ENCODE measurements at regions of chr10 and their contacts with region 1.

Region 1: DNA sequence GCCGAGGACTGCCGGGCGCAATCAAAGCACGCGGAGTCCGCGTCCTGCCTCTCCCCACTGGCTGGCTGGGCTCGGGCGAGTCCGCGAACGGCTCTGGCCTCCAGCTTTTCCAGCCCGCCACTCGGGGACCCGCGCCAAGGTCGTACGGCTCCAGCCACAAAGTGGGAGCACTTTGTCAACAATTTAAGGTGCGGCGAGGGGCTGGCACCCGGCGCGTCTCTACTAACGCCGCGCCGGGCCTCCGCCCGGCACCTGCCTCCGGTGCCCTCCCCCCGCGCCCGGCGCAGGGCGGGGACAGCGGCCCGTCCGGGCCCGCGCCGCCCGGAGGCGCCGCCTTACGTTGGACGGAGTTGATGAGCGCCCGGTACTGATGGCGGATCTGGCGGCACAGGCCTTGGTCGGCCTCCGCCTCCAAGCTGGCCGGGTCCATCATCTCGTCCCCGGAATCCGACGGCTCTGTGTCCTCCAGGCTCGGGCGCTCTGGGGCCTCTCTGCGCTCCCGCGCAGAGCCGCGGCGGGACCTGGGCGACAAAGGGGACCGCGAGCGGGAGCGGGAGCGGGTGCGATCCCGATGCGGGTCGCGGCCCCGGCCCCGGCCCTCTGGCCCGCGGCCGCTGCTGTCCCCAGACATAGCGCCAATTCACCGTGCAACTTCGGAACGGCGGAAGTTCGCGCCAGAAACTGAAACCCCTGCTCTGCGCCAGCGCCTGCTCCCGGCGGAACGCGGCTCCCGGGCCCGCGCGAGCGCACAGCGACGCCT is at the start of gene NSMCE4A:
- DNase-seq: peak; percentile 49 to 83 (median 66)
- ATAC-seq: peak; percentile 85
- H3K4me3 ChIP-seq: peak within 1 kb of the TSS; percentile 63
- H3K4me3 Mint-ChIP-seq: peak within 1 kb of the TSS; percentile 87
- H3K27ac ChIP-seq: peak within 1 kb of the TSS; percentile 31 to 40
- H3K27ac Mint-ChIP-seq: peak within 1 kb of the TSS; percentile 36
- H3K4me1 ChIP-seq: peaks cover 21% of the 10 kb centered on the region
- H3K4me1 Mint-ChIP-seq: peaks cover 19% of the 10 kb centered on the region
- H3K27me3 ChIP-seq: no peaks in the 10 kb centered on the region
- H3K27me3 Mint-ChIP-seq: no peaks in the 10 kb centered on the region
- CTCF ChIP-seq: no peak
- total RNA-seq, gene NSMCE4A: 34.2 to 36.5 TPM

Region 2: DNA sequence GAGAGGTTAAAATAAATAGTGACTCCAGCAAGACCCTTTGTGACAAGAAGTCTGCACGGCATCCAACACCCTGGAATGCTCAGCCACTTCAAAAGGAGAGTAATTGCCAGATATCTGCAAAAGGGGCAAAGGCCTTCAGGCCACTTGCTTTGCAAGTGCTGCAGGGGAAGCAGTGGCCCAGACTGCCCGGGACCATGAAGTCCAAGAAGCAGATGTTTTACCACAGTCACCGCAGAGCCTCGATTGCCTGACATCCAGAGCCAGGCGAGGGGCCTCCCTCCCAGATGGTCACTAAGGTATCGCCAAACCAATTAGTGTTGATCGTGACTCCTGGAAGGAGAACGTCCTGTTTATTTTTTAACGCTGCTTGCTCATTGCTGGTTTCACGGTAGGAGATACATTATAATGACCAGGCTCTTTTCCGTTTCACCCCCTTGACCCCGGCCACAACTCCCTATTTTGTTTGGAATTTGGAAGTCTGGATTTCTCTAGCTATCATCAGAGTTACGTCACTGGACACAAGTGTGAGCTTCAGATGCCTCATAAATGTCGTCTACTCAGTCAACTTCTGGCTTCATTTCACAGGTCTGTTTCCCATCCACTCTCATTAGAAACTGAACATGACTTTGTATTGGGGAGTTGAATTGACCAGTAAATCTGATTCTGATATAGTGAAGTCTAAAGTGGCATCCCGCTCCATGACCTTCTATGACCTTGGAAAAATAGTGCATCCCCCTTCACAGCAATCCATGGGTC is 847.4 kb before region 1 on chr10:
- CTCF ChIA-PET with region 1: no interaction called
- POLR2A ChIA-PET with region 1: no interaction called
- intact Hi-C with region 1: no loop called
- DNase-seq: no peak
- ATAC-seq: no peak
- H3K4me3 ChIP-seq: no peak overlapping the region
- H3K4me3 Mint-ChIP-seq: no peak overlapping the region
- H3K27ac ChIP-seq: no peak overlapping the region
- H3K27ac Mint-ChIP-seq: no peak overlapping the region
- H3K4me1 ChIP-seq: no peaks in the 10 kb centered on the region
- H3K4me1 Mint-ChIP-seq: no peaks in the 10 kb centered on the region
- H3K27me3 ChIP-seq: no peaks in the 10 kb centered on the region
- H3K27me3 Mint-ChIP-seq: no peaks in the 10 kb centered on the region
- CTCF ChIP-seq: no peak

Region 3: GRCh38 chr10:121927841-121928527 is 46.7 kb before region 1 on chr10 and contains the start of gene ATE1:
- CTCF ChIA-PET with region 1: no interaction called
- POLR2A ChIA-PET with region 1: interaction called, 9 read pairs
- intact Hi-C with region 1: loop called in 1 of 2 experiments (anchors 1 kb)
- DNase-seq: peak; percentile 67 to 92 (median 78)
- ATAC-seq: peak; percentile 93
- H3K4me3 ChIP-seq: peak within 1 kb of the TSS; percentile 99
- H3K4me3 Mint-ChIP-seq: peak within 1 kb of the TSS; percentile 96
- H3K27ac ChIP-seq: peak within 1 kb of the TSS; percentile 76 to 85
- H3K27ac Mint-ChIP-seq: peak within 1 kb of the TSS; percentile 92
- H3K4me1 ChIP-seq: peaks cover 11% of the 10 kb centered on the region
- H3K4me1 Mint-ChIP-seq: peaks cover 32% of the 10 kb centered on the region
- H3K27me3 ChIP-seq: no peaks in the 10 kb centered on the region
- H3K27me3 Mint-ChIP-seq: no peaks in the 10 kb centered on the region
- CTCF ChIP-seq: no peak
- total RNA-seq, gene ATE1: 18.5 to 20.9 TPM

Region 4: DNA sequence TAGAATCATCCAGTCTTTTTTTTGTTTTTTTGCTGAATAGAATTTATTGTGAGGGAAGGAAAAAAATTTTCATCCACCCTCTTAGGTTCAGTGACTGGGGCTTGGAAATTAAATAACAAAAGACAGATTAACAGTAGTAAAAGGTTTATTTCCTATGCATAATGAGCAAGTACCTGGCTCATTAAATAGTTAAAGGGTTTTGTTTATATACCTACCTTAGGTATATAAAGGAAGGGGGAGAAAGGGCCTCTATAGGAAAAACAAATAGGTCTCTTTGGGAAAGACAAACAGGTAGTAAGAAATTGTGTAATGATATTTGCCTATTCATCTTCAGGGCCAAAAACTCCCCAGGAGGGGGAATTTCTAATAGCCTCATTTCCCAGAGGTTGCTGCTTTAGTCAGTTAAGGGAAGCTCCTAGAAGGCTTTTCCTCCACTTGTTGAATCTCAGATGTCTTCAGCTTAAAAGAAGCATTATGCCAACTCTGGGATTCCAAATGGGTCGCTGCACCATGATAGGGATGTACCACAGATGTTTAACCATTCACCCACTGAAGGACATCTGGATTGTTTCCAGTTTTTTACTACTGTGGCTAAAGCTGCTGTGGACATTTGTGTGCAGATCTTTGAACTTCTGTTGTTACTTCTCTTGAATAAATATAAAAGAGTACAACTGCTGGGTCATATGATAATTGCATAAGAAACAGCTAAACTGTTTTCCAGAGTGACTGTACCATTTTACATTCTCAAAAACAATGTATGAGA is 1045.4 kb after region 1 on chr10:
- CTCF ChIA-PET with region 1: no interaction called
- POLR2A ChIA-PET with region 1: no interaction called
- intact Hi-C with region 1: loop called in 1 of 2 experiments (anchors 10 kb)
- DNase-seq: no peak
- ATAC-seq: no peak
- H3K4me3 ChIP-seq: no peak overlapping the region
- H3K4me3 Mint-ChIP-seq: no peak overlapping the region
- H3K27ac ChIP-seq: no peak overlapping the region
- H3K27ac Mint-ChIP-seq: no peak overlapping the region
- H3K4me1 ChIP-seq: no peaks in the 10 kb centered on the region
- H3K4me1 Mint-ChIP-seq: peaks cover 9% of the 10 kb centered on the region
- H3K27me3 ChIP-seq: no peaks in the 10 kb centered on the region
- H3K27me3 Mint-ChIP-seq: no peaks in the 10 kb centered on the region
- CTCF ChIP-seq: no peak